CD8-positive, alpha-beta T cell (primary cell): ENCODE measurements at regions of chr18 and their contacts with region 1.

Region 1: DNA sequence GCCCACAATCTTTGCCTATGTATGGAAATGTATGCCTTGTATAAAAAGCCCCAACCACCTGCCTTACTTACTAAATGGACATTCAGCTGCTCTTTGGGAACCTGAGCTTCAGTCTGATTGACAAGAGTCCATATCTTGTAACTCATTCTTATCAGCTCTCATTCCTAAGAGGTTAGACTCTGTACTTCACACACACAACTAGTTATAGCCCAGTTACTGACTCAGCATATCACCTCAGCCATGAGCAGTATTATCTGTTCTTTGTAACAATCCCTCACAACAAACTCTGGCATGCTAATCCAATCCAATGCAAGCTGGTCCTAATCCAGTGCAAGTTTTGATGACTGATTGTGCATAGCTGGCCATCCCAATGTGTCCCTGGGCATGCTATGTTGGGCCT is 250.6 kb downstream of the RIT2 start:
- DNase-seq: no peak
- ATAC-seq: no peak
- H3K4me3 ChIP-seq: no peak overlapping the region
- H3K4me3 Mint-ChIP-seq: no peak overlapping the region
- H3K27ac ChIP-seq: no peak overlapping the region
- H3K27ac Mint-ChIP-seq: no peak overlapping the region
- H3K4me1 ChIP-seq: no peaks in the 10 kb centered on the region
- H3K4me1 Mint-ChIP-seq: no peaks in the 10 kb centered on the region
- H3K27me3 ChIP-seq: no peaks in the 10 kb centered on the region
- H3K27me3 Mint-ChIP-seq: no peaks in the 10 kb centered on the region
- CTCF ChIP-seq: no peak

Region 2: GRCh38 chr18:42882122-42882521 is 17.2 kb after region 1 on chr18:
- CTCF ChIA-PET with region 1: no interaction called
- POLR2A ChIA-PET with region 1: no interaction called
- intact Hi-C with region 1: loop called in 1 of 2 experiments (anchors 2 kb)
- DNase-seq: no peak
- ATAC-seq: no peak
- H3K4me3 ChIP-seq: no peak overlapping the region
- H3K4me3 Mint-ChIP-seq: no peak overlapping the region
- H3K27ac ChIP-seq: no peak overlapping the region
- H3K27ac Mint-ChIP-seq: no peak overlapping the region
- H3K4me1 ChIP-seq: no peaks in the 10 kb centered on the region
- H3K4me1 Mint-ChIP-seq: no peaks in the 10 kb centered on the region
- H3K27me3 ChIP-seq: no peaks in the 10 kb centered on the region
- H3K27me3 Mint-ChIP-seq: no peaks in the 10 kb centered on the region
- CTCF ChIP-seq: no peak